ENCODE measurements at regions of chr11 and their contacts with region 1.

Region 1: DNA sequence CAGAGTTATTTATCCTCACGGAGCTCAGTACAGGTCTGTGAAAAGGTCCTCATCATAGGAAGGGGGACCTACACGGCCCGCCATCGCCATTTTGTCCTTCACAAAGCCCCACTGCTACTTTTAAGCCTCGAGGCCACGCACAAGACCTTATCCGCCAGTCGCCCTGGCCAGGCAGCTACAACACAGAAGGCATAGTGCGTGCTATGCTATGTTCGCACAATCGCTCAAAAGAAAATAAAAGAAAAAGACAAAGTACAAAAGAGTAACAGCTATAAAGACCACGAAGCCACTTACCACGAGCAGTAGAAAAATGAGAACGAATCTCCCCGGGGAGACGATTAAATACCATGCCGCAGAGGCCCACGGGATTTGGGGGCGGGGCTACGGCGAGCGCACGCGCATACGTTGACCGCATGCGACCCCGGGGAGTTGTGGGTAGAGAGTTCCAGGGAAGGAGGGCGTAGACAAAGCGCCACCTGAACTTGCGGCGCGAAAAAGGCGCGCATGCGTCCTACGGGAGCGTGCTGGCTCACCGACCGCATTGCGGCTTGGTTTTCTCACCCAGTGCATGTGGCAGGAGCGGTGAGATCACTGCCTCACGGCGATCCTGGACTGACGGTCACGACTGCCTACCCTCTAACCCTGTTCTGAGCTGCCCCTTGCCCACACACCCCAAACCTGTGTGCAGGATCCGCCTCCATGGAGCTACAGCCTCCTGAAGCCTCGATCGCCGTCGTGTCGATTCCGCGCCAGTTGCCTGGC is 16.4 kb upstream of the WDR74 start:
- H3K4me3 ChIP-seq: peak overlapping the region; percentile 88
- H3K27ac ChIP-seq: peak overlapping the region; percentile 82
- H3K4me1 ChIP-seq: no peaks in the 10 kb centered on the region
- CTCF ChIP-seq: no peak

Region 2: DNA sequence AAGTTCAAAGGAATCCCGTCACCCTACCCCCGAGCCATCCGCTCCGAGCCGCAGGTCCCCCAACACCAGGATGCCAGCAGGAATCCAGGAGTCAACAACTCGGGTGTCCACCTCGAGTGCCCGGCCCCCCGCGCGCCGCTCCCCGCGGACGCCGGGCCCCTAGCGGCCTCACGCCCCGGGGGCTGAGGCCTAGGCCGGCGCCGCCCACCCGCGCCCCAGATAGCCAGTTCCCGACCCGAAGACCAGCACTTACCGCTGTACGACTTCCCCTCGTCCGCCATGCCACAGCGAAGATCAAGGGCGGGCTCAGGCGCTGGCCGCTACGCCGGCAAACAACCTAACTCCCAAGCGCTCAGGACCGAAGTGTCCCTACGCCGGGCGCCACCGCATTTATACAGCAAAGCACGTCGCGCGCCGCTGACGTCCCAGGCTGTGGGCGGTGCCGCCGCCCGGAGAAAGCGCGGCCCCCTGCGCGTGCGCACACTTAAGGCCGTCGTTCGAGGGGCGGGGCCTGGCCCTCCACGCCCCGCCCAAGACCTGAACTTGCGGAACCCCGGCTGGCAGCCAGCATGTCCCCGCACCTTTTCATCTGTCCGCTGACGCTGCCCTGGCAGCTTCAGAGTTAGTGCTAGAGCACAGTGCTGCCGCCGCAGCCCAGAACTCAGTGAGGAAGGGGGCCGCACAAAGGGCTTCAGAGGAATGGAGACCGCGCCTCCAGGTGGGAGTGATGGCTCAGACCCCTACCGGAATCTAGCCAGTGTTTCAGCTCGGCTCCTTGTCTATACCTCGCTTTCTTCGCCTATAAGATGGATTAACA is 50.5 kb before region 1 on chr11 and contains the start of gene NXF1:
- CTCF ChIA-PET with region 1: no interaction called
- POLR2A ChIA-PET with region 1: interaction called, 25 read pairs
- H3K4me3 ChIP-seq: peak within 1 kb of the TSS; percentile 84
- H3K27ac ChIP-seq: peak within 1 kb of the TSS; percentile 63
- H3K4me1 ChIP-seq: no peaks in the 10 kb centered on the region
- CTCF ChIP-seq: no peak

Region 3: DNA sequence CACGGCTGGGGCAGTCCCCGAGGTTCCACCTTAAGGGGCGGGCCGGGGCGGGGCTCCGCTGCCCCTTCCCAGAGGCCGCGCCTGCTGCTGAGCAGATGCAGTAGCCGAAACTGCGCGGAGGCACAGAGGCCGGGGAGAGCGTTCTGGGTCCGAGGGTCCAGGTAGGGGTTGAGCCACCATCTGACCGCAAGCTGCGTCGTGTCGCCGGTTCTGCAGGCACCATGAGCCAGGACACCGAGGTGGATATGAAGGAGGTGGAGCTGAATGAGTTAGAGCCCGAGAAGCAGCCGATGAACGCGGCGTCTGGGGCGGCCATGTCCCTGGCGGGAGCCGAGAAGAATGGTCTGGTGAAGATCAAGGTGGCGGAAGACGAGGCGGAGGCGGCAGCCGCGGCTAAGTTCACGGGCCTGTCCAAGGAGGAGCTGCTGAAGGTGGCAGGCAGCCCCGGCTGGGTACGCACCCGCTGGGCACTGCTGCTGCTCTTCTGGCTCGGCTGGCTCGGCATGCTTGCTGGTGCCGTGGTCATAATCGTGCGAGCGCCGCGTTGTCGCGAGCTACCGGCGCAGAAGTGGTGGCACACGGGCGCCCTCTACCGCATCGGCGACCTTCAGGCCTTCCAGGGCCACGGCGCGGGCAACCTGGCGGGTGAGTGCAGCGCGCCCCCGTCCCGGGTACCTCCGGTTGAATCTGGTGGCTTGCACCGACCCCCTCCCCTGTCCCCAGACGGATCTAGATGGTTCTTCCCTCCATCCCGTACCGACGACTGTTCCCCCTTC is 25.2 kb after region 1 on chr11 and contains the start of gene SLC3A2:
- CTCF ChIA-PET with region 1: interaction called, 5 read pairs
- POLR2A ChIA-PET with region 1: interaction called, 78 read pairs
- H3K4me3 ChIP-seq: peak within 1 kb of the TSS; percentile 93
- H3K27ac ChIP-seq: peak within 1 kb of the TSS; percentile 98
- H3K4me1 ChIP-seq: no peaks in the 10 kb centered on the region
- CTCF ChIP-seq: peak; percentile 97

Region 4: DNA sequence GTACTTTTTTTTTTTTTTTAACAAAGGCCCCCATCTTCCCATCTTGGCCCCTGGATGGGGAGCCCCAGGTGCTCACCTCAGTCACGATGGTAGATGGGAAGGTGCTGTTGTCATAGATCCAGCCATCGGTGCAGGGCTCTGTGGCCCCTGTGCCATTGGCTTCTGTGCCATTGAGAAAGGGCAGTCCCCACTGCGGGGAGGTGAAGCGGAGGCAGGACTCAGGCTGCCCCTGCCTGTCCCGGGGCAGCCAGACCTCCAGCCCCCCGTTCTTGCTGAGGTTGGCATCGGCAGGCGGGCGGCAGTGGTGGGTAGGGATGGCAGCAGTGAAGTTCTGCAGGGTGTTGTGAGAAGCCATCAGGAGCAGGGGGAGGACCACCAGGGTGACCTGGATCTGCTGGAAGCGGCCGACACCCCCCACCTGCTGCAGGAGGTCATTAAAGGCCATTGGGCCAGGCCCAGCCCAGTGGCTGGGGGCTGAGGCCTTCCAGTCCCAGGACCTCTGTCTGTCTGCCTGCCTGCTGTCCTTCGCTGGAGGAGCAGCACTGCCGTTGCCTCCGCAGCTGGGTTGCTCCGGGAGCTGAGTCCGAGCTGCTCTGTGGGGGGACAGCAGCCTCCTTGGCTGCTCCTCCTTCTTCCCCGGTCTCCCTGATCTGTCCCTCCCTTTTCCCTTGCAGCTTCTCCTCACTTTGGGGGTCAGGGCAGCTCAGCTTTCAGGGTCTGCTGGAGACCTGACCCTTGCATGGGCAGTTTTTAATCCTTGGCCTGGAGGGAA is 128.7 kb after region 1 on chr11 and contains the start of gene SLC22A6:
- CTCF ChIA-PET with region 1: no interaction called
- POLR2A ChIA-PET with region 1: no interaction called
- H3K4me3 ChIP-seq: no peak within 1 kb of the TSS
- H3K27ac ChIP-seq: no peak within 1 kb of the TSS
- H3K4me1 ChIP-seq: no peaks in the 10 kb centered on the region
- CTCF ChIP-seq: no peak